Ascending aorta (tissue), 2 donors: ENCODE measurements at regions of chr20 and their contacts with region 1.

Region 1: GRCh38 chr20:40160097-40160550 is 528.9 kb downstream of the MAFB start:
- DNase-seq: peak in 1 of 2 donors; percentile 71
- H3K4me3 ChIP-seq: no peak overlapping the region
- H3K27ac ChIP-seq: no peak overlapping the region
- H3K4me1 ChIP-seq: no peaks in the 10 kb centered on the region
- H3K27me3 ChIP-seq: no peaks in the 10 kb centered on the region
- CTCF ChIP-seq: peak; percentile 40 to 82 (median 61)

Region 2: GRCh38 chr20:40251284-40251932 is 91.3 kb after region 1 on chr20:
- intact Hi-C with region 1: loop called (anchors 10 kb)
- DNase-seq: no peak
- H3K4me3 ChIP-seq: no peak overlapping the region
- H3K27ac ChIP-seq: no peak overlapping the region
- H3K4me1 ChIP-seq: no peaks in the 10 kb centered on the region
- H3K27me3 ChIP-seq: no peaks in the 10 kb centered on the region
- CTCF ChIP-seq: peak in 1 of 3 experiments; percentile 48